MCF 10A (cell line): ENCODE measurements at regions of chr1 and their contacts with region 1.

Region 1: DNA sequence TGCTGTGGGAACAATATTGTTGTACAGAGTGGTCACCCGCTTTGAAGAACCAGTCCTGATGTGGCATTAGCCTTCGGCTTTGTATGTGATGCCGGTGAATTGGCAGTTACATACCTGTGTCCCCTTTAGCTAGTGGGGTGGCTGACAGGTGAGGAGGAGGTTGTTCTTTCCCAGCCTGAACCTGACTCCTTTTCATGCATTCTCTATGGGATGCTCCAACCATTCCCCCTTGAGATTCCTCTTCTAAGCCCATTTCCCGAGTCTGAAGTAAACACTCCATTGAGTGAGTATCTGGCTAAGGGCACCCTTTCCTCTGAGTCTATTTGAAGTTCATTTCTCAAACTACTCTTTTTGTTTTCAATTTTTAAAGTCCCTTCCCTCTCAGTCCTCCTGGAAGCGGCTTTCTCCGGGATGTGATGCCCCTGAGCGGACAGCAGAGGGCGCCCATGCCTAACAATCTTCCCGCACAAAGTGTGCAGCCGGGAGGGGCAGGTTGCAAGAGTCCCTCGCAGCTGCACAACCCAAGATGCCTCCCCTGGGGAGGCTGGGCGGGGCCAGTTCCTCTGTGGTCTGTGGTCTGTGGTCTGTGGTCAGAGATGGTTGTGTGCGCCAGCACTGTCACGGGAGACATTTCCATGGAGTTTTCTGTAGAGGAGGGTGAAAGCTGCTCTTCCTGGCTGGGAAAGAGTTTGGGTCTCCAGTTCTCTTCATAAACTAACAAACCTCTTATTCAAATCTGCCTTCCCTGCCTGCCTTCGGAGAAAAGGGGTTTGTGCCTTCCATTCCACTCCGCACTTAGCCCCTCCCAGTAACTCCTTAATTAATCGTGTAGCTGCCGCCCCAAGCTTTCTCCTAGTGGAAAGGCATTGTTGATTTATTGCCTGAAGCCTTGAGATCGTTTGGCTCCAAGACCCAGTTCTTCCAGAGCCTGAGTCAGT is 36.4 kb upstream of the LMX1A start:
- DNase-seq: peak; percentile 88
- H3K4me3 Mint-ChIP-seq: peak overlapping the region; percentile 47
- H3K27ac Mint-ChIP-seq: no peak overlapping the region
- H3K4me1 Mint-ChIP-seq: peaks cover 18% of the 10 kb centered on the region
- H3K27me3 Mint-ChIP-seq: peaks cover 83% of the 10 kb centered on the region
- CTCF ChIP-seq: peak; percentile 98

Region 2: GRCh38 chr1:165114022-165114888 is 278.6 kb before region 1 on chr1:
- CTCF ChIA-PET with region 1: interaction called, 10 read pairs
- POLR2A ChIA-PET with region 1: no interaction called
- intact Hi-C with region 1: no loop called
- DNase-seq: peak; percentile 85
- H3K4me3 Mint-ChIP-seq: no peak overlapping the region
- H3K27ac Mint-ChIP-seq: no peak overlapping the region
- H3K4me1 Mint-ChIP-seq: peaks cover 17% of the 10 kb centered on the region
- H3K27me3 Mint-ChIP-seq: peaks cover 16% of the 10 kb centered on the region
- CTCF ChIP-seq: peak; percentile 96

Region 3: GRCh38 chr1:165376041-165376810 is 16.7 kb before region 1 on chr1:
- CTCF ChIA-PET with region 1: interaction called, 212 read pairs
- POLR2A ChIA-PET with region 1: no interaction called
- intact Hi-C with region 1: no loop called
- DNase-seq: peak; percentile 99
- H3K4me3 Mint-ChIP-seq: peak overlapping the region; percentile 63
- H3K27ac Mint-ChIP-seq: peak overlapping the region; percentile 71
- H3K4me1 Mint-ChIP-seq: peaks cover 20% of the 10 kb centered on the region
- H3K27me3 Mint-ChIP-seq: peaks cover 18% of the 10 kb centered on the region
- CTCF ChIP-seq: no peak

Region 4: DNA sequence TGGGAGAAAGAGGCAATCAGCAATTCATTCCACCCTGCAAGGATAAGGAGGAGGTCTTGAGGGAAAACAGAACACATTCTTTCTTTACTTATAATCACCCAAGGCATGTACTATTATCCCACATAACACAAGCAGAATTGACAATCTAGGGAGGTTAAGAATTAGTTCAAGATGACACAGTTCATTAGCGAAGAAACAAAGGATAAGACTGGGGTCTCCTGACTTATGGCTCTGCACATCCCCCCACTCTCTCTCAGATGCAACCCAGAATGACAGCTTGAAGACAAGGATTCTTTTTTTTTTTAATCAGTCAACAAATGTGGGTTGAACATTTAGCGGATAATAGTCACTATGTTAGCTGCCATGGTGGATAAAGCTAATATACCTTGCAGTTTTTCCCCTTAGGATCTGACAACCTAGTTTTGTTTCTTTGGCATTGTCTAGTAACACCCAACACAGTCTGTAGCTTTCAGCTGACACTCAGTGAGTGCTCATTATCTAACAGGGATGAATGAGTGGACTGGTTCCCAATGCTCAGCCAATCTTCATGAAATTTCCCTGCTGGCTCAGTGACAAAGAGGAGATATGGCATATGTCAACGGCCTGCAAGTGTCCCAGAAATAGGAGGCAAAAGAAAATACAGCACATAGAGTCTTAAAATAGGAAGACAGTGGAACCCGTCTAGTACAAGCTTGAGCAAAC is 16.9 kb after region 1 on chr1:
- CTCF ChIA-PET with region 1: interaction called, 143 read pairs
- POLR2A ChIA-PET with region 1: no interaction called
- intact Hi-C with region 1: no loop called
- DNase-seq: no peak
- H3K4me3 Mint-ChIP-seq: no peak overlapping the region
- H3K27ac Mint-ChIP-seq: no peak overlapping the region
- H3K4me1 Mint-ChIP-seq: no peaks in the 10 kb centered on the region
- H3K27me3 Mint-ChIP-seq: peaks cover 32% of the 10 kb centered on the region
- CTCF ChIP-seq: no peak

Region 5: DNA sequence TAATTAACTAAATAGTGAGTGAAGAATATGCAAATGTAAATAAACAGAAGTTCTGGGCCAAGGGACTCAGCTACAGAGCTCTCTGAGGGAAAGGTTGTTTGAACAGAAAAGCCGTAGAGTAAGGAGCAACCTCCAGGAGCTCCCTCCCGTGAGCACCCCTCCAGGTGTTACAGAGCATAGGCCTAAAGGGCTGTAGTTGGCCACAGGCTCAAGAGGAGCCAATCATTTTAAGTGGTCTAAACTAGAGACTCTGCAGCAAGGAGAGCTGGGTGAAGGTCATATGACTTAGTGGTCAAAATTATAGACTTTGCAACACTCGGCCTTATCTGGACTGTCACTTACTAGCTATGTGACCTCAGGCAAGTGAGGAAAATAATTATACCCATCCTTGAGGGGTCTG is 71.1 kb after region 1 on chr1:
- CTCF ChIA-PET with region 1: no interaction called
- POLR2A ChIA-PET with region 1: no interaction called
- intact Hi-C with region 1: no loop called
- DNase-seq: no peak
- H3K4me3 Mint-ChIP-seq: no peak overlapping the region
- H3K27ac Mint-ChIP-seq: no peak overlapping the region
- H3K4me1 Mint-ChIP-seq: no peaks in the 10 kb centered on the region
- H3K27me3 Mint-ChIP-seq: peaks cover 45% of the 10 kb centered on the region
- CTCF ChIP-seq: no peak

Region 6: DNA sequence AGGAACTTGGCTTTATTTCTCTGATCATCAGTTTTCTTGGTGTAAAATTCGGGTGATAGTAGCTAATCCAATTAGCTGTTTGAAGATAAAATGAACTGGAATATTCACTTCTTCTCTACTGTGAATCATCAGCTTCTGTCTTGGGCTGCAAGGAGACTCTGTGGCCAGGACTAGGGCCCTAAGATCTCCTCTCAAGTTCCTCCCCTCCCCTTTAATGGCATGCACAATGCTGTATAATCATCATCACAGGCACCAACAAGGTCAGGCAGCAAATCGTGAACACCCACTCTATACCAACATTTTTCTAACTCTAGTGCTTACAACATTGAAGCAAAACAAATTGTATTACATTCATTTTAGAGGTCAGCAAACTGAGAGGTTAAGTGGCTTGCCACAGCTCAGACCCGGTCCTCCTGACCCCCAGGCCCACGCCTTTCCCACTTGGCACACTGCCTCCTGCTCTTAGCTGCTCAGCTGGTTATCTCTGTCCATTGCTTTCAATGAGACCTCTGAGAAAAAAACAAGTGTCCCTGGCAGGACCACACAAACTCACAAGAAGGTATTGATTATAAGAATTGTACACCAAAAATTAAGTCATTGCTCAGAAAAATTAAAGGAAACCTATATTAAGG is 182.7 kb after region 1 on chr1:
- CTCF ChIA-PET with region 1: interaction called, 11 read pairs
- POLR2A ChIA-PET with region 1: no interaction called
- intact Hi-C with region 1: no loop called
- DNase-seq: no peak
- H3K4me3 Mint-ChIP-seq: no peak overlapping the region
- H3K27ac Mint-ChIP-seq: no peak overlapping the region
- H3K4me1 Mint-ChIP-seq: no peaks in the 10 kb centered on the region
- H3K27me3 Mint-ChIP-seq: peaks cover 9% of the 10 kb centered on the region
- CTCF ChIP-seq: no peak

Region 7: GRCh38 chr1:165610885-165611284 is 218.0 kb after region 1 on chr1:
- CTCF ChIA-PET with region 1: no interaction called
- POLR2A ChIA-PET with region 1: no interaction called
- intact Hi-C with region 1: no loop called
- DNase-seq: no peak
- H3K4me3 Mint-ChIP-seq: no peak overlapping the region
- H3K27ac Mint-ChIP-seq: no peak overlapping the region
- H3K4me1 Mint-ChIP-seq: no peaks in the 10 kb centered on the region
- H3K27me3 Mint-ChIP-seq: peaks cover 5% of the 10 kb centered on the region
- CTCF ChIP-seq: no peak

Region 8: GRCh38 chr1:165717918-165718515 is 325.1 kb after region 1 on chr1:
- CTCF ChIA-PET with region 1: interaction called, 3 read pairs
- POLR2A ChIA-PET with region 1: no interaction called
- intact Hi-C with region 1: loop called (anchors 10 kb)
- DNase-seq: peak; percentile 80
- H3K4me3 Mint-ChIP-seq: no peak overlapping the region
- H3K27ac Mint-ChIP-seq: no peak overlapping the region
- H3K4me1 Mint-ChIP-seq: no peaks in the 10 kb centered on the region
- H3K27me3 Mint-ChIP-seq: no peaks in the 10 kb centered on the region
- CTCF ChIP-seq: peak; percentile 87